ENCODE measurements at regions of chr4 and their contacts with region 1.

Region 1: GRCh38 chr4:185183619-185184281 is 20.1 kb downstream of the CFAP97 start:
- DNase-seq: no peak
- ATAC-seq: peak; percentile 94
- H3K4me3 ChIP-seq: no peak overlapping the region
- H3K27ac ChIP-seq: no peak overlapping the region
- H3K4me1 ChIP-seq: no peaks in the 10 kb centered on the region
- H3K27me3 ChIP-seq: no peaks in the 10 kb centered on the region
- CTCF ChIP-seq: peak; percentile 77 to 83 (median 78)
- EP300 ChIP-seq: no peak
- POLR2A ChIP-seq: no peak
- RAD21 ChIP-seq: peak; percentile 93

Region 2: GRCh38 chr4:185096032-185096653 is 87.6 kb before region 1 on chr4:
- CTCF ChIA-PET with region 1: interaction called, 39 read pairs
- POLR2A ChIA-PET with region 1: no interaction called
- RAD21 ChIA-PET with region 1: interaction called, 7 read pairs
- SMC1A ChIA-PET with region 1: interaction called, 4 read pairs
- in situ Hi-C with region 1: no loop called
- intact Hi-C with region 1: no loop called
- DNase-seq: no peak
- ATAC-seq: peak; percentile 56; the same call in 2 of the 3 replicates
- H3K4me3 ChIP-seq: no peak overlapping the region
- H3K27ac ChIP-seq: no peak overlapping the region
- H3K4me1 ChIP-seq: no peaks in the 10 kb centered on the region
- H3K27me3 ChIP-seq: peaks cover 2 to 3% of the 10 kb centered on the region in 2 experiments; a peak in 1 of 4 replicates
- CTCF ChIP-seq: peak; percentile 34 to 54 (median 42); a peak in 5 of 6 replicates
- EP300 ChIP-seq: no peak
- POLR2A ChIP-seq: no peak
- RAD21 ChIP-seq: peak; percentile 74

Region 3: DNA sequence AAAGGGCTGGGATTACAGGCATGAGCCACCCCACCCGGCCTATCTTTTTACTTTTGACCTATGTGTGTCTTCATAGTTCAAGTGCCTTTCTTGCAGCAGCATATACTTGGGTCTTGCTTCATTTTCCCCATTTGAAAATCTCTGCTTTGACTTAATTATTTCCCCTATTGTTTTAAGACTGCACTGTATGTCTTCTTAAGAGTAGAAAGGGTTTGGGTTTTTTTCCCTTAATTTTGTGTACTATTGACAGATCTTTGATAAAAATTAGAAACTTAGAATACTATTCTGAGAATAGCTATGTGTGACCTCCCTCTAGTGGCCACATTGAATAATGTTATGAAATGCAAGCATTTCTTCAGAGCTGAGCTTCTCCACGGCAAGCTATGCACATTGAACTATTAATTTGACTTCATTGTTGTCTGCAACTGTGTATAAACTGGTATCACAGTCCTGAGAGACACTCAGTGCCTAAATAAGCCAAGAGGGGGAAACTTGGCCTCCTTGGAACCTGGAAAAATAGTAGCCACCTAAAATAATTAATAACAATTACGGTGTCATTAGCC is 49.4 kb before region 1 on chr4:
- CTCF ChIA-PET with region 1: interaction called, 69 read pairs
- POLR2A ChIA-PET with region 1: no interaction called
- RAD21 ChIA-PET with region 1: interaction called, 31 read pairs
- SMC1A ChIA-PET with region 1: interaction called, 25 read pairs
- in situ Hi-C with region 1: no loop called
- intact Hi-C with region 1: loop called (anchors 2 kb)
- DNase-seq: no peak
- ATAC-seq: peak; percentile 91
- H3K4me3 ChIP-seq: no peak overlapping the region
- H3K27ac ChIP-seq: no peak overlapping the region
- H3K4me1 ChIP-seq: no peaks in the 10 kb centered on the region
- H3K27me3 ChIP-seq: no peaks in the 10 kb centered on the region; a peak in 1 of 4 replicates
- CTCF ChIP-seq: peak; percentile 69 to 83 (median 81)
- EP300 ChIP-seq: no peak
- POLR2A ChIP-seq: no peak
- RAD21 ChIP-seq: peak; percentile 79

Region 4: DNA sequence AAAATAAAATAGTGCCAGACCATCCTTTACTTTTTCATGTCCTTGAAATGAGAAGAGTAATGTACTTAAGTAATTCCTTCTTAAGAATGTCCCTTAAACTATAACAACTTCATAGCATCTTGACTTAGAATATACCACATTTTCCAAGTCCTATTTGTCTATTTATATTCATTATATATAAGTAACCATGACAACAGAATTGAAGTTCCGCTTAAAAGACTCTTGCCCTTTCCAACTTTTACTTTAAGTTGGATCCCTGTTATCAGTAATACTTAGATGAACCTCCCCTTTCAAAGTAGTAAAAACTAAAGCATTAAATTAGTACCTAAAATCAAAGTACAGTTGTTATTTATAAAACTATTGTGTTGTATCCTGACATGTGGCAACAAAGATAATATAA is 23.4 kb before region 1 on chr4:
- CTCF ChIA-PET with region 1: interaction called, 43 read pairs
- POLR2A ChIA-PET with region 1: no interaction called
- RAD21 ChIA-PET with region 1: interaction called, 4 read pairs
- SMC1A ChIA-PET with region 1: interaction called, 14 read pairs
- in situ Hi-C with region 1: no loop called
- intact Hi-C with region 1: no loop called
- DNase-seq: no peak
- ATAC-seq: no peak
- H3K4me3 ChIP-seq: no peak overlapping the region
- H3K27ac ChIP-seq: no peak overlapping the region
- H3K4me1 ChIP-seq: peaks cover 9% of the 10 kb centered on the region
- H3K27me3 ChIP-seq: no peaks in the 10 kb centered on the region
- CTCF ChIP-seq: no peak
- EP300 ChIP-seq: no peak
- POLR2A ChIP-seq: no peak
- RAD21 ChIP-seq: no peak

Region 5: GRCh38 chr4:185171373-185172071 is 12.2 kb before region 1 on chr4:
- CTCF ChIA-PET with region 1: interaction called, 78 read pairs
- POLR2A ChIA-PET with region 1: interaction called, 3 read pairs
- RAD21 ChIA-PET with region 1: interaction called, 11 read pairs
- SMC1A ChIA-PET with region 1: interaction called, 35 read pairs
- in situ Hi-C with region 1: no loop called
- intact Hi-C with region 1: no loop called
- DNase-seq: peak; percentile 19
- ATAC-seq: peak; percentile 92
- H3K4me3 ChIP-seq: no peak overlapping the region
- H3K27ac ChIP-seq: peak overlapping the region; percentile 70
- H3K4me1 ChIP-seq: peaks cover 13% of the 10 kb centered on the region
- H3K27me3 ChIP-seq: no peaks in the 10 kb centered on the region
- CTCF ChIP-seq: no peak
- EP300 ChIP-seq: no peak
- POLR2A ChIP-seq: no peak
- RAD21 ChIP-seq: no peak

Region 6: GRCh38 chr4:185304944-185305690 is 121.4 kb after region 1 on chr4:
- CTCF ChIA-PET with region 1: interaction called, 75 read pairs
- POLR2A ChIA-PET with region 1: interaction called, 3 read pairs
- RAD21 ChIA-PET with region 1: interaction called, 9 read pairs
- SMC1A ChIA-PET with region 1: interaction called, 51 read pairs
- in situ Hi-C with region 1: no loop called
- intact Hi-C with region 1: no loop called
- DNase-seq: peak; percentile 68
- ATAC-seq: peak; percentile 73
- H3K4me3 ChIP-seq: no peak overlapping the region
- H3K27ac ChIP-seq: peak overlapping the region; percentile 99
- H3K4me1 ChIP-seq: peaks cover 59% of the 10 kb centered on the region
- H3K27me3 ChIP-seq: no peaks in the 10 kb centered on the region
- CTCF ChIP-seq: peak; percentile 70 to 79 (median 73)
- EP300 ChIP-seq: no peak
- POLR2A ChIP-seq: no peak
- RAD21 ChIP-seq: peak; percentile 83